ENCODE measurements at regions of chr13 and their contacts with region 1.

Region 1: GRCh38 chr13:48492470-48493065 is 40.3 kb downstream of the RCBTB2 start:
- DNase-seq: no peak
- ATAC-seq: no peak
- H3K4me3 ChIP-seq: no peak overlapping the region
- H3K27ac ChIP-seq: no peak overlapping the region
- H3K4me1 ChIP-seq: peaks cover 55% of the 10 kb centered on the region
- H3K27me3 ChIP-seq: no peaks in the 10 kb centered on the region
- CTCF ChIP-seq: no peak

Region 2: DNA sequence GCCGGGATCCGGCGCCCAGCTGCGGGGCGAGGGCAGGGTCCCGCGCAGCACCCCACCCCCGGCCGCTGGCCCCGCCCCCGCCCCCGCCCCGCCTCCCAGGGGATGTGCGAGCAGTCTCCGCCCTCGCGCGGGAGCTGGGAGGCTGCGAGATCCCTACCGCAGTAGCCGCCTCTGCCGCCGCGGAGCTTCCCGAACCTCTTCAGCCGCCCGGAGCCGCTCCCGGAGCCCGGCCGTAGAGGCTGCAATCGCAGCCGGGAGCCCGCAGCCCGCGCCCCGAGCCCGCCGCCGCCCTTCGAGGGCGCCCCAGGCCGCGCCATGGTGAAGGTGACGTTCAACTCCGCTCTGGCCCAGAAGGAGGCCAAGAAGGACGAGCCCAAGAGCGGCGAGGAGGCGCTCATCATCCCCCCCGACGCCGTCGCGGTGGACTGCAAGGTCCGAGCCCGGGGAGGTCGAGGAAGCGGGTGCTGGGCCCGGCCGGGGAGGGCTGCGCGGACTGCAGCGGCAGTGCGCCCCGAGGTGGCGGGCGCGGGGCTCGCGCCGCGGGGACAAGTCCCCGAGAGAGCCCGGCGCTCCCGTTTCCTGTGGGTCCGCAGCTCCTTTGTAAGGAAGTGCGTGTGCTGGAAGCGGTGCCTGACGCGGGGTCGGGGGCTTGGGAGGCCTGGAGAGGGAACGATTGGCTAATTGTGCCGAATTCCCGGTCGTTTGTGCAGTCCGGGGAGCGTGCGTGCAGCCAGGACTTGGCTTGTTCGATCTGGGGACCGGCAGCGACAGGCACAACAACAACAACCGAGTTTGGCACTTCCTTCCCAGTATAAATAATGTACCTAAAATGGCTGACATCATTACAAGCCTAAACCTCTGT is 259.3 kb before region 1 on chr13 and contains the start of gene ITM2B:
- CTCF ChIA-PET with region 1: no interaction called
- POLR2A ChIA-PET with region 1: no interaction called
- intact Hi-C with region 1: loop called (anchors 5 kb)
- DNase-seq: peak; percentile 52
- ATAC-seq: peak; percentile 84
- H3K4me3 ChIP-seq: peak within 1 kb of the TSS; percentile 88
- H3K27ac ChIP-seq: peak within 1 kb of the TSS; percentile 32; the same call in 1 of the 2 replicates
- H3K4me1 ChIP-seq: peaks cover 32% of the 10 kb centered on the region
- H3K27me3 ChIP-seq: no peaks in the 10 kb centered on the region
- CTCF ChIP-seq: peak; percentile 45; the same call in 1 of the 2 replicates
- total RNA-seq, gene ITM2B: 74.6 and 105 TPM in 2 replicates

Region 3: DNA sequence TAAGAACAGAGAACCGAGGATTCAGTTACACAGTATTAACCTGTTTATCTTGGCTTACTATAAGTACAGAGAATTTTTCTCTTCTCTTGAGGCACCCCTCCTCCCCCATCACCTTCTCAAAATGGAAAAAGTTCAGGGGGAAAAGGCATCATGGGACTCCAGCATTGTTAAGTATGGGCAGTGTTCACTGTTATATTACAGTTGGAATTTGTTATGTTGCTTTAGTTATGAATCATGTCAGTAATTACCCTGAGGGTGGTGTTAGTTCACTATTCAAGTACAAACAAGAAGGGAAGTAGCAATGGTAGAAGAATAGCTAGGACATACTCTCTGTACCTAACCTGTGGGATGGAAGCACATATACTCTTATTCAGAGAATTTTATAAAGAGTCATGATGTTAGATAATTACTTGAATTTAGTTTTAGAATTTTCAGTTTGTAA is 91.7 kb before region 1 on chr13:
- CTCF ChIA-PET with region 1: no interaction called
- POLR2A ChIA-PET with region 1: interaction called, 3 read pairs
- intact Hi-C with region 1: loop called (anchors 5 kb)
- DNase-seq: peak; percentile 59
- ATAC-seq: peak; percentile 83
- H3K4me3 ChIP-seq: no peak overlapping the region
- H3K27ac ChIP-seq: peak overlapping the region; percentile 54
- H3K4me1 ChIP-seq: peaks cover 36% of the 10 kb centered on the region
- H3K27me3 ChIP-seq: no peaks in the 10 kb centered on the region
- CTCF ChIP-seq: 0 out of 2 replicates have a peak, but pooled peaks have one; percentile 10

Region 4: GRCh38 chr13:48412881-48413351 is 79.7 kb before region 1 on chr13 and contains the start of gene LPAR6:
- CTCF ChIA-PET with region 1: no interaction called
- POLR2A ChIA-PET with region 1: no interaction called
- intact Hi-C with region 1: loop called (anchors 1 kb)
- DNase-seq: peak; percentile 69
- ATAC-seq: peak; percentile 63
- H3K4me3 ChIP-seq: peak within 1 kb of the TSS; percentile 73
- H3K27ac ChIP-seq: peak within 1 kb of the TSS; percentile 72
- H3K4me1 ChIP-seq: peaks cover 26% of the 10 kb centered on the region
- H3K27me3 ChIP-seq: no peaks in the 10 kb centered on the region
- CTCF ChIP-seq: no peak
- total RNA-seq, gene LPAR6: 3.6 TPM in 2 replicates

Region 5: DNA sequence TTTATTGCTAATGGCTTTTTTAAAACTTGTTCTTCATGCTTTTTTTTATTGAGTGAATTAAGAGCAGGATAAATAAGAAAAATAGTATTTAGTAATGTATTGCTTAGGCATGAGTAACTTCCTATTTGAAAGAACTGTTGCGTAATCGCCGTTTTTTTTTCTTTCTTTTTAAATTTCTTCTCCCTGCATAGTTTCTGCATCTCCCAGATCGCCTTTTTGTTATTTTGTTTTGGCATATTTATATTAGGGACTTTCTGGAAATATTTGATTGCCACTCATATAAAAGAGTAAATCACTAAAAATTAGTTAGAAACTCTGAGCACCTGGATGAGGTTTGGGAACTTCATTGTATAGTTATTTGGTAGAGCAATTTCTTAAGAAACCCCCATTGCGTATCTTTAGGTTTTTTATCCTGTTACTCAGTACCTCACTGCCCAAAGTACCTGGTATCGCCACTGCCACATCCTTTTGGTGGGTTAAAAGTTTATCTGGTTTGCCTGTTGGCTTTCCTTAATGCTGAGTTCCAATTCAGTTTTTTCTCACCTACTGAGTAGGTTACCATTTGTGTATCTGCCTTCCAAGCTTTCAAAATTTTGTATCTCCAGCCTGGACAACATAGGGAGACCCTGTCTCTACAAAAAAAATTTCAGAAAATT is 43.5 kb before region 1 on chr13:
- CTCF ChIA-PET with region 1: no interaction called
- POLR2A ChIA-PET with region 1: no interaction called
- intact Hi-C with region 1: loop called (anchors 1 kb)
- DNase-seq: peak; percentile 78
- ATAC-seq: peak; percentile 29
- H3K4me3 ChIP-seq: peak overlapping the region; percentile 10; the same call in 1 of the 2 replicates
- H3K27ac ChIP-seq: peak overlapping the region; percentile 68
- H3K4me1 ChIP-seq: peaks cover 45% of the 10 kb centered on the region
- H3K27me3 ChIP-seq: no peaks in the 10 kb centered on the region
- CTCF ChIP-seq: no peak

Region 6: GRCh38 chr13:48532506-48533499 is 40.2 kb after region 1 on chr13 and contains the start of gene RCBTB2:
- CTCF ChIA-PET with region 1: no interaction called
- POLR2A ChIA-PET with region 1: interaction called, 3 read pairs
- intact Hi-C with region 1: loop called (anchors 5 kb)
- DNase-seq: peak; percentile 95
- ATAC-seq: peak; percentile 90
- H3K4me3 ChIP-seq: peak within 1 kb of the TSS; percentile 88
- H3K27ac ChIP-seq: peak within 1 kb of the TSS; percentile 54
- H3K4me1 ChIP-seq: peaks cover 7% of the 10 kb centered on the region; the same call in 1 of the 2 replicates
- H3K27me3 ChIP-seq: no peaks in the 10 kb centered on the region
- CTCF ChIP-seq: no peak
- total RNA-seq, gene RCBTB2: 2.1 and 2.5 TPM in 2 replicates

Region 7: GRCh38 chr13:48585456-48585840 is 92.9 kb after region 1 on chr13:
- CTCF ChIA-PET with region 1: interaction called, 4 read pairs
- POLR2A ChIA-PET with region 1: no interaction called
- intact Hi-C with region 1: loop called (anchors 1 kb)
- DNase-seq: peak; percentile 89
- ATAC-seq: peak; percentile 84
- H3K4me3 ChIP-seq: no peak overlapping the region
- H3K27ac ChIP-seq: peak overlapping the region; percentile 87
- H3K4me1 ChIP-seq: peaks cover 30% of the 10 kb centered on the region
- H3K27me3 ChIP-seq: no peaks in the 10 kb centered on the region
- CTCF ChIP-seq: no peak

Measured in PC-3 (cell line).